ENCODE measurements at regions of chr18 and their contacts with region 1.

Region 1: DNA sequence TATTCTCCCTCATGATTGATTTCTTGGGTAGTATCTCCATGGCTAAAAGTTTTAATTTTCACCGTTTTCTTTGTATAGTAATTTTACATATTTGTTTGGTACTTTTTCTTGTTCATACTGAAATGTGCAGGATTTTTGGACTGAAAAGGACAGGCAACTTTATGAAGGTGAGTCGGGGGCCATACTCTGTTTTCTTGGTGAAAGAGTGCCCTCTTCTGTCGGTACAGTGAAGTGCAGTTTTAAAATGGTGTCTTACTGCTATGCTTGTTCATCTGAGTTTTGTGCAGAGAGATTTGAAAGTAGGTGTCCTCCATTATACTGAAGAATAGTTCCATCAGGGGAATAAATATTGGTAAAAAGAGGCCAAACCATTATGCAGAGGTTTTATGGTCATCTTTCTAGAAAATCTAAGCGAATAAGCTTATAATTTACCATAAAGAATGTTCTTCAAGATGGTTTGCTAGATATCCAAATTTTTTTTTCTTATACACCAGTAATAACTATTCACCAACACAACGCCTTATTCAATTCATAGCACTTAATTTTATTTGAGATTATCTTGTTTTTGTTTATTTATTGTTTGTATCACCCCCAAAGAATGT is 8.7 kb upstream of the SERPINB13 start:
- DNase-seq: no peak
- ATAC-seq: peak; percentile 65 to 66
- H3K4me3 ChIP-seq: no peak overlapping the region
- H3K27ac ChIP-seq: no peak overlapping the region
- H3K4me1 ChIP-seq: no peaks in the 10 kb centered on the region
- H3K27me3 ChIP-seq: no peaks in the 10 kb centered on the region
- CTCF ChIP-seq: peak; percentile 63

Region 2: DNA sequence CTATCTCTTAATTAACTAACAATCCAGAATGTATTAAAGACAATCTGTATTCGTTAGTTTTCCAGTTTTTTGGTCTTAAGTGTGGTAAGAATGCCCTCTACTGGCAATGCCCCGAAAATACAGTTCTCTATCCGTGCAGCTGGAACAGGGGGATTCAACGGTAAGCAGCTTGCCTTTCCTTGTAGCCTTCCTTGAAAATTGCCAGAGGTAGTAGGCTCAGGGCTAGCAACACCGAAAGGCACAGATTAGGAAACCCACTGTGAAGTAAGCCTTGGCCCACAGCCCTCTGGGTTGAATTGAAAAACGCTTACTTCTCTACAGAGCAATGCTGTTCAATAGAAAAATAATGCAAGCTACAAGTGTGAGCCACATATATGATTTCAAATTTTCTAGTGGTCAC is 139.1 kb before region 1 on chr18:
- intact Hi-C with region 1: no loop called
- DNase-seq: no peak
- ATAC-seq: peak; percentile 66 to 79
- H3K4me3 ChIP-seq: no peak overlapping the region
- H3K27ac ChIP-seq: no peak overlapping the region
- H3K4me1 ChIP-seq: peaks cover 3% of the 10 kb centered on the region
- H3K27me3 ChIP-seq: no peaks in the 10 kb centered on the region
- CTCF ChIP-seq: peak; percentile 83

Region 3: GRCh38 chr18:63523660-63524059 is 54.8 kb before region 1 on chr18:
- intact Hi-C with region 1: loop called (anchors 10 kb)
- DNase-seq: no peak
- ATAC-seq: no peak
- H3K4me3 ChIP-seq: no peak overlapping the region
- H3K27ac ChIP-seq: no peak overlapping the region
- H3K4me1 ChIP-seq: no peaks in the 10 kb centered on the region
- H3K27me3 ChIP-seq: no peaks in the 10 kb centered on the region
- CTCF ChIP-seq: no peak

Measured in lower lobe of right lung (tissue), 2 donors.